Esophagus muscularis mucosa (tissue), 4 donors: ENCODE measurements at regions of chr1 and their contacts with region 1.

Region 1: DNA sequence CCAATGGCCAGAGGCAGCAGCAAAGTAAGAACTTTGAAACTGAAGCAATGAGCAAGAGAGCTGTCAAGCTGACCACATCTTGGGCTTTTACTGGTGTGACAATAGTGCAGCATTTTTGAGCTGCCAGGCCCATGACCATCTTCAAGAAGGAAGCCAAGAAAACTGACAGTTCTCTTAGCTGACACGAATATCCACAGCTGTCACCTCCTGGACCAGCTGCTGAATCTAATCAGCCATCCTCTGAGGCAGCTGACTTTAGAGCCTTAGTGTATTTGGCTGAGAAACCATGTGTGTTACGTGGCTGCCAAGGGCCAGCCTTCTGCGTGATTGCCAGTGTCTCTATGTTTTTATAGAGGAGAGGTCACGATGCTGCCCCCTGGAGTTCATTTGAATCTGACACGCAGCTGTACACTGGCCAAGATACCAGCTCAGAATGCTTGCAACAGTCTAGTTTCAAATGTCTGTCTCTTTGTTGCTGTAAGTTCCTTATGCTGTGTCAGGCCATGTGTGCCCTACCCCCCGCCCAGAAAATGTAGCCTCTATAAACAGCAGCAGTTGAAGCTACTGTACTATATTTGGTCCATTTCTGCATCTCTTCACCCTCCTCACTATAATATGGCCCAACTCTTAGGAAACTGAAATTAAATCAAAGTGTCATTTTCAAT is 39.7 kb downstream of the PALMD start:
- DNase-seq: peak; percentile 93
- H3K4me3 ChIP-seq: no peak overlapping the region
- H3K27ac ChIP-seq: peak overlapping the region; percentile 24 to 59 (median 53)
- H3K4me1 ChIP-seq: peaks cover 16 to 47% (median 26%) of the 10 kb centered on the region in 4 donors
- H3K27me3 ChIP-seq: no peaks in the 10 kb centered on the region
- CTCF ChIP-seq: peak; percentile 55 to 57 (median 55)
- EP300 ChIP-seq: no peak
- POLR2A ChIP-seq: no peak

Region 2: GRCh38 chr1:99481391-99481996 is 204.2 kb before region 1 on chr1:
- intact Hi-C with region 1: loop called (anchors 5 kb)
- DNase-seq: no peak
- H3K4me3 ChIP-seq: no peak overlapping the region
- H3K27ac ChIP-seq: no peak overlapping the region
- H3K4me1 ChIP-seq: no peaks in the 10 kb centered on the region
- H3K27me3 ChIP-seq: no peaks in the 10 kb centered on the region
- CTCF ChIP-seq: peak; percentile 69 to 76 (median 69)
- EP300 ChIP-seq: no peak
- POLR2A ChIP-seq: no peak

Region 3: DNA sequence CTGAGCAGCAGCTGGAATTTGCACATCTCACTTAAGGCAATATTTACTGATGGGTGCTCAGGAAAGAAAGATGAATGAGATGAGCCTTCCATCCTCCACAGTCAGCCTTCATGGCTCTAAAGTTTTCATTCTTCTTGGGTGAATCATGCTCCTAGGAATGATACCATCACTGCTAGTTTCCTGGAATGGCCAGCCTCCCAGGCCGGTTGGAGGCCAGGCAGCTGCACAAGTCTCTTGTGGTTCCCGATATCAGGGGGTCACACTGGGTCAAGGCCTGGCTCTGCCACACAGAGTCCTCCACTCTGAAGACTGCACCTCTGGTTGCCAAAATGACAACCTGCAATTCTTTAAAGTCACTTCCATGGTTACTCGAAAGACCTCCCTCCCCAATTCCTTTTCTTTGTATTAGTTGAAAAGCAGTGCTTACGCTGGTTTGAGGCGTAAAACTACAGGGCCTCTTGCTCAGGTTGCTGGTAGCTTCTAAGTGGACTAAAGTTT is 85.9 kb before region 1 on chr1:
- intact Hi-C with region 1: loop called (anchors 10 kb)
- DNase-seq: no peak
- H3K4me3 ChIP-seq: no peak overlapping the region
- H3K27ac ChIP-seq: peak overlapping the region; percentile 13 to 47 (median 27)
- H3K4me1 ChIP-seq: peaks cover 5 to 34% (median 21%) of the 10 kb centered on the region in 4 donors
- H3K27me3 ChIP-seq: no peaks in the 10 kb centered on the region
- CTCF ChIP-seq: no peak
- EP300 ChIP-seq: no peak
- POLR2A ChIP-seq: no peak

Region 4: GRCh38 chr1:99634971-99635624 is 50.5 kb before region 1 on chr1:
- intact Hi-C with region 1: no loop called
- DNase-seq: no peak
- H3K4me3 ChIP-seq: no peak overlapping the region
- H3K27ac ChIP-seq: no peak overlapping the region
- H3K4me1 ChIP-seq: peaks cover 0 to 12% (median 5%) of the 10 kb centered on the region in 4 donors
- H3K27me3 ChIP-seq: no peaks in the 10 kb centered on the region
- CTCF ChIP-seq: no peak
- EP300 ChIP-seq: no peak
- POLR2A ChIP-seq: no peak

Region 5: DNA sequence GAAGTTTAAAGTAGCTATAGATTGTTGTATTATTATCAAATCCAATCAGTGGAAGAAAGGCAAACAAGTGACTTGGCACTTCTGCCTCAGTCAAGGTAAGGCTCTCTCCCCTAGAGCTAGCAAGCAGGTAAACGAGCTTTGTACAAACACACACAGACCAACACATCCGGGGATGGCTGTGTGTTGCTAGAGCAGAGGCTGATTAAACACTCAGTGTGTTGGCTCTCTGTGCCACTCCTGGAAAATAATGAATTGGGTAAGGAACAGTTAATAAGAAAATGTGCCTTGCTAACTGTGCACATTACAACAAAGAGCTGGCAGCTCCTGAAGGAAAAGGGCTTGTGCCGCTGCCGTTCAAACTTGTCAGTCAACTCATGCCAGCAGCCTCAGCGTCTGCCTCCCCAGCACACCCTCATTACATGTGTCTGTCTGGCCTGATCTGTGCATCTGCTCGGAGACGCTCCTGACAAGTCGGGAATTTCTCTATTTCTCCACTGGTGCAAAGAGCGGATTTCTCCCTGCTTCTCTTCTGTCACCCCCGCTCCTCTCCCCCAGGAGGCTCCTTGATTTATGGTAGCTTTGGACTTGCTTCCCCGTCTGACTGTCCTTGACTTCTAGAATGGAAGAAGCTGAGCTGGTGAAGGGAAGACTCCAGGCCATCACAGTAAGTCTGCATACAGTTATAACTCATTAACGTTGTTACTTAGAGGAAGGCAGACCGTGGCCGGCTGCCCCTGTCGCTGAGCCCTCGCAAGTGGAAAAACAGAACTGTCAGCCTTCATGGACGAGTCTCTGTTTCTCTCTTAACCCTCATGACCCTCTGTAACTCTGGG is 39.7 kb before region 1 on chr1 and contains the start of gene PALMD:
- intact Hi-C with region 1: loop called (anchors 5 kb)
- DNase-seq: no peak
- H3K4me3 ChIP-seq: peak within 1 kb of the TSS; percentile 42 to 59 (median 54)
- H3K27ac ChIP-seq: peak within 1 kb of the TSS; percentile 76 to 84 (median 81)
- H3K4me1 ChIP-seq: peaks cover 26 to 75% (median 62%) of the 10 kb centered on the region in 4 donors
- H3K27me3 ChIP-seq: no peaks in the 10 kb centered on the region
- CTCF ChIP-seq: no peak
- EP300 ChIP-seq: no peak
- POLR2A ChIP-seq: no peak
- total RNA-seq, gene PALMD: 15.4 to 33.0 (median 27.5) TPM